ENCODE measurements at regions of chr3 and their contacts with region 1.

Region 1: GRCh38 chr3:171867981-171868380 is 24.8 kb downstream of the TMEM212 start:
- DNase-seq: no peak
- ATAC-seq: no peak; the same call in 1 of the 2 replicates
- H3K4me3 Mint-ChIP-seq: no peak overlapping the region
- H3K27ac Mint-ChIP-seq: no peak overlapping the region
- H3K4me1 Mint-ChIP-seq: peaks cover 8% of the 10 kb centered on the region
- H3K27me3 Mint-ChIP-seq: no peaks in the 10 kb centered on the region
- CTCF ChIP-seq: peak; percentile 58

Region 2: GRCh38 chr3:171846597-171846996 is 21.4 kb before region 1 on chr3:
- CTCF ChIA-PET with region 1: no interaction called
- POLR2A ChIA-PET with region 1: no interaction called
- DNase-seq: no peak
- ATAC-seq: no peak
- H3K4me3 Mint-ChIP-seq: no peak overlapping the region
- H3K27ac Mint-ChIP-seq: no peak overlapping the region
- H3K4me1 Mint-ChIP-seq: peaks cover 11% of the 10 kb centered on the region
- H3K27me3 Mint-ChIP-seq: no peaks in the 10 kb centered on the region
- CTCF ChIP-seq: no peak

Region 3: GRCh38 chr3:171878461-171879225 is 10.7 kb after region 1 on chr3:
- CTCF ChIA-PET with region 1: interaction called, 16 read pairs
- POLR2A ChIA-PET with region 1: no interaction called
- DNase-seq: no peak
- ATAC-seq: peak; percentile 39
- H3K4me3 Mint-ChIP-seq: no peak overlapping the region
- H3K27ac Mint-ChIP-seq: no peak overlapping the region
- H3K4me1 Mint-ChIP-seq: peaks cover 67% of the 10 kb centered on the region
- H3K27me3 Mint-ChIP-seq: no peaks in the 10 kb centered on the region
- CTCF ChIP-seq: no peak

Measured in WTC11 (cell line).